Activated B cell treated with CpG ODN at 0.5 μM for 24 hours (primary cell): ENCODE measurements at regions of chr7 and their contacts with region 1.

Region 1: DNA sequence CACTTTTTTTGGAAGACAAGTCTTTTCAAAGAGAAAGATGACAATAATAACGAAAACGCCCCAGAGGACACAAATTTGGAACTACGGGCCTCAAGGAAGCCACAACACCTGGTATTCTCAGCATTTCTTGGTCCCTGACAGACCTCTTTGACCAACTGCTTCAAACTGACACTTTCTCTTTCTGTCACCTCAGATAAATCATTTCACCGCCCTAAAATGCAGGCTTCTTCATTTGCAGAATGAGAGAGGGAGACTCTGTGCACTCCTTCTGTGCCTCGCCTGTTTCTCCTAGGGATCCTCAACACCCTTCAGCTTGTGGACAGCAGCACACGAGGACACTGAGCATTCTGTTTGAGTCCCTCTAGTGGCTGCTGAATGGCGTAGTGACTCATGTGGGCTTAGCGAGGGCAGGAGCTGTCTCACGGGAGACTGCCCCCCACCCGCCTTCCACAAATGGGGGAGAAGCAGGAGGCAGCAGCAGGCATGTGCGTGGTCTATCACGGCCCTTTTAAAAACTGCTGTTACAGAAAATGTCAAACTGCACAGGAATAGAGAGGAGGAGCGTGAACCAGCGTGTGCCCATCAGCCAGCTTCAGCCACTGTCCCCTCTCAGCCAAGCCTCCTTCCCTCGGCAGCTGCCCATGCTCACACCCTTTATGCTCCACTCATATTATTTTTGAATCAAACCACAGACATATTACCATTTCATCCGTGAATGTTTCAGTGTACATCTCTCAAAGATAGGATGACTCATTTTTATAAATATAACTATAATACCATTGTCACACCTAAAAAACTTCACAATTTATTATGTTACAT is 41.4 kb downstream of the GSDME start:
- DNase-seq: no peak
- ATAC-seq: no peak
- H3K4me3 Mint-ChIP-seq: peak overlapping the region; percentile 64
- H3K27ac Mint-ChIP-seq: peak overlapping the region; percentile 61
- H3K4me1 Mint-ChIP-seq: peaks cover 65% of the 10 kb centered on the region
- H3K27me3 Mint-ChIP-seq: no peaks in the 10 kb centered on the region
- CTCF ChIP-seq: no peak

Region 2: GRCh38 chr7:24756535-24757352 is 40.9 kb after region 1 on chr7:
- CTCF ChIA-PET with region 1: no interaction called
- POLR2A ChIA-PET with region 1: interaction called, 3 read pairs
- intact Hi-C with region 1: loop called (anchors 1 kb)
- DNase-seq: no peak
- ATAC-seq: peak; percentile 15
- H3K4me3 Mint-ChIP-seq: peak overlapping the region; percentile 92
- H3K27ac Mint-ChIP-seq: peak overlapping the region; percentile 55
- H3K4me1 Mint-ChIP-seq: peaks cover 25% of the 10 kb centered on the region
- H3K27me3 Mint-ChIP-seq: peaks cover 39% of the 10 kb centered on the region
- CTCF ChIP-seq: no peak

Region 3: DNA sequence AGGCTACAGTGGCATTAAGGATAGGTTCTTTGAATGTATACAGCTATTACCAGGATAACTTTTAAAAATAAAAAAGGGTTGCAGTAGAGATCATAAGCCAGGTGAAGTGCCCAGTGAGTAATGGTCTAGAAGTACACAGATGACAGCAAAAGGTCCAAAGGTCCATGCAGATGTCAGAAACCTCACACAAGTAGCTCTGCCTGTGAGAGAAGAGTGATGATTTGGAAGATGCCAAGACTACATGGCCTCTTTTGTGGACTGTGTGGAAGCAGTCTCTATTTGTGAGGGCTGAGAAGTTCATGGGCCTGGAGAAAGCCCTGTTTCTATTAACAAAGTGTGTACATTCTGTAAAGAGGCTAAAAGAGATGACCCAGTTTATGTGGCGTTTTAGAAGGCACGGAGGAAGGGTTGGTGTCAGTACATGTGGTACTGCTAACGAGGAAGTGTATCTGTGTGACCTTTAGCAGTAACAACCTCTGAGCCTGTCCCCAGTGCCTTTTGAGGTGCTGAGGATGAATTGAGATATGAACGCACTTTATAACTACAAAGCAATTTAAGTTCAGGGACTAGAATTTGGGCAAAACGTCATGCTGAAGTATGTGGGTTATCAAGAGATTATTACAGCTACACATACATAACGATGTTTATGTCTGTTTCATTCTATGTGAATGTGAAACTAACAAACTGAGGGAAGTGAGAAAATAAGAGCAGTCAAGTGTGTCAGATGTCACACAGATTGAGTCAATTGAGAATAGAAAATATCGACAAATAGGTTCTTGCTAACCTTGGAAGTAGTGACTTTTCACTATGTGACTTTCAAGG is 401.6 kb after region 1 on chr7:
- CTCF ChIA-PET with region 1: no interaction called
- POLR2A ChIA-PET with region 1: interaction called, 6 read pairs
- intact Hi-C with region 1: loop called (anchors 2 kb)
- DNase-seq: no peak
- ATAC-seq: peak; percentile 91
- H3K4me3 Mint-ChIP-seq: peak overlapping the region; percentile 75
- H3K27ac Mint-ChIP-seq: peak overlapping the region; percentile 88
- H3K4me1 Mint-ChIP-seq: peaks cover 43% of the 10 kb centered on the region
- H3K27me3 Mint-ChIP-seq: no peaks in the 10 kb centered on the region
- CTCF ChIP-seq: no peak